AG04449 (cell line): ENCODE measurements at regions of chr6 and their contacts with region 1.

Region 1: GRCh38 chr6:73732845-73733675 is 37.1 kb downstream of the CD109 start:
- DNase-seq: no peak
- H3K4me3 ChIP-seq: no peak overlapping the region
- CTCF ChIP-seq: peak; percentile 93

Region 2: GRCh38 chr6:73665686-73666319 is 67.3 kb before region 1 on chr6:
- CTCF ChIA-PET with region 1: interaction called, 20 read pairs
- POLR2A ChIA-PET with region 1: no interaction called
- DNase-seq: no peak
- H3K4me3 ChIP-seq: no peak overlapping the region
- CTCF ChIP-seq: no peak

Region 3: GRCh38 chr6:73695619-73696421 is 37.2 kb before region 1 on chr6 and contains the start of gene CD109:
- CTCF ChIA-PET with region 1: interaction called, 52 read pairs
- POLR2A ChIA-PET with region 1: no interaction called
- DNase-seq: peak; percentile 14
- H3K4me3 ChIP-seq: peak within 1 kb of the TSS; percentile 69
- CTCF ChIP-seq: no peak

Region 4: GRCh38 chr6:73713410-73714147 is 19.5 kb before region 1 on chr6:
- CTCF ChIA-PET with region 1: interaction called, 12 read pairs
- POLR2A ChIA-PET with region 1: no interaction called
- DNase-seq: no peak
- H3K4me3 ChIP-seq: no peak overlapping the region
- CTCF ChIP-seq: no peak

Region 5: GRCh38 chr6:73747289-73747688 is 14.2 kb after region 1 on chr6:
- CTCF ChIA-PET with region 1: interaction called, 53 read pairs
- POLR2A ChIA-PET with region 1: no interaction called
- DNase-seq: no peak
- H3K4me3 ChIP-seq: no peak overlapping the region
- CTCF ChIP-seq: no peak

Region 6: DNA sequence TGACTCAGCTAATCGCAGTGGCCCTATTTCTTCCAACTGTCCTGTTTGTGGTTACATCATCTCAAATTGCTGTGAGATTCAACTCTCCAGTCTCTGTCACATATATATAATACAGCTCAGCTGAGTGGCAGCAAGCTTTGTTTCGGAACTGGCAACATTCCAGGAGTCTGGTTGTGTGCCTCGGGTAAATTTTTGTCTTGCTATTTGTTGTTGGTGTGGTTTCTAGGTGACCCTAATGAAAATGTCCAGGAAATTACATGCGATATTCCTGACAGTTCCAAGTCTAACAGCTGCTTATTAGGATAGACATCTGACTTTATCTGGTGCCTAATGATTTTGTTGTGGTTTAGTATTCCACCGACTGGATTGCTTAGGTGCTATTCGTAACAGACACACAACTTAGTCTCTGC is 544.7 kb after region 1 on chr6:
- CTCF ChIA-PET with region 1: no interaction called
- POLR2A ChIA-PET with region 1: no interaction called
- DNase-seq: no peak
- H3K4me3 ChIP-seq: no peak overlapping the region
- CTCF ChIP-seq: no peak